Left ventricle myocardium inferior (tissue), 1 donor: ENCODE measurements at regions of chr15 and their contacts with region 1.

Region 1: GRCh38 chr15:51776952-51777574 is 25.7 kb downstream of the TMOD2 start:
- DNase-seq: no peak
- H3K4me3 ChIP-seq: no peak overlapping the region
- H3K27ac ChIP-seq: no peak overlapping the region
- H3K4me1 ChIP-seq: peaks cover under 1% of the 10 kb centered on the region
- H3K27me3 ChIP-seq: no peaks in the 10 kb centered on the region
- CTCF ChIP-seq: peak; percentile 83

Region 2: DNA sequence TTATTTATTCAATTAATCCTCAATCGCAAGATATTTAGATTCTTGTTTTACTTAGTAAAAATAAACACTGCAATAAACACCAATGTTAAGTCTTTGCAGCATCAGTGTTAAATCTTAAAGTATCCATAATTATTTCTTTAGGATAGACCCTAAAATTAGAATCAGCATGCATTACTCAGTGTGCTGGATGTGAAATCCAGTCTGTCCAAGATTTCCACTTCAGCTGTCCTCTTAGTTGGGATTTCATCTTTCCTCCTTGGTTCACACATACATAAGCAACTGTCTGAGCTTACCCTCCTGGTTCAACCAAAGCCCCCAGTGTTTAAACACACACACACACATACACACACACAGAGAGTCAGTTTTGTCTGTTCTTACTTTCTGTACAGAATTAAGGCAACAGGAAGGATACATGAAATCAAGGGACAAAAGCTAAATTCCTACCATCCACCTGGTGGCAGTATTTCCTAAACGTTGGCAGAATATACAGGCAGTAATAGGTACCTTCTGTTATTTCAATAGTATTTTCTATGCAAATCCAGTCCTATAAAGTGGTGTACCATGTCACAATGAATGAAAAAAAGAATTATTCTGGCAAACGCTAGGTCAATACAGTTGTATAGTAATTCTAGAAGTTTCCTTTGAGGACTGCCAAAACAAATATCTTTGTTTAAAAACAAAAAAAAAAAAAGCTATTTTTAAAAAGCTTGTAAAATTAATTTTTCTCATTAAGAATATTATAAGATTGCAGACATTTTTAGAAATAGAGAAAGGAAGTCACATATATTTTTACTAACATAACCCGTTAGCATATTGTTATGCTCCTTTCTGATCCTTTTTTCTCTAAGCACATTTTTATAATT is 127.2 kb before region 1 on chr15:
- intact Hi-C with region 1: loop called (anchors 1 kb)
- DNase-seq: no peak
- H3K4me3 ChIP-seq: no peak overlapping the region
- H3K27ac ChIP-seq: no peak overlapping the region
- H3K4me1 ChIP-seq: no peaks in the 10 kb centered on the region
- H3K27me3 ChIP-seq: no peaks in the 10 kb centered on the region
- CTCF ChIP-seq: peak; percentile 80

Region 3: GRCh38 chr15:51853998-51854397 is 76.9 kb after region 1 on chr15:
- intact Hi-C with region 1: no loop called
- DNase-seq: no peak
- H3K4me3 ChIP-seq: no peak overlapping the region
- H3K27ac ChIP-seq: no peak overlapping the region
- H3K4me1 ChIP-seq: peaks cover 57% of the 10 kb centered on the region
- H3K27me3 ChIP-seq: no peaks in the 10 kb centered on the region
- CTCF ChIP-seq: no peak

Region 4: DNA sequence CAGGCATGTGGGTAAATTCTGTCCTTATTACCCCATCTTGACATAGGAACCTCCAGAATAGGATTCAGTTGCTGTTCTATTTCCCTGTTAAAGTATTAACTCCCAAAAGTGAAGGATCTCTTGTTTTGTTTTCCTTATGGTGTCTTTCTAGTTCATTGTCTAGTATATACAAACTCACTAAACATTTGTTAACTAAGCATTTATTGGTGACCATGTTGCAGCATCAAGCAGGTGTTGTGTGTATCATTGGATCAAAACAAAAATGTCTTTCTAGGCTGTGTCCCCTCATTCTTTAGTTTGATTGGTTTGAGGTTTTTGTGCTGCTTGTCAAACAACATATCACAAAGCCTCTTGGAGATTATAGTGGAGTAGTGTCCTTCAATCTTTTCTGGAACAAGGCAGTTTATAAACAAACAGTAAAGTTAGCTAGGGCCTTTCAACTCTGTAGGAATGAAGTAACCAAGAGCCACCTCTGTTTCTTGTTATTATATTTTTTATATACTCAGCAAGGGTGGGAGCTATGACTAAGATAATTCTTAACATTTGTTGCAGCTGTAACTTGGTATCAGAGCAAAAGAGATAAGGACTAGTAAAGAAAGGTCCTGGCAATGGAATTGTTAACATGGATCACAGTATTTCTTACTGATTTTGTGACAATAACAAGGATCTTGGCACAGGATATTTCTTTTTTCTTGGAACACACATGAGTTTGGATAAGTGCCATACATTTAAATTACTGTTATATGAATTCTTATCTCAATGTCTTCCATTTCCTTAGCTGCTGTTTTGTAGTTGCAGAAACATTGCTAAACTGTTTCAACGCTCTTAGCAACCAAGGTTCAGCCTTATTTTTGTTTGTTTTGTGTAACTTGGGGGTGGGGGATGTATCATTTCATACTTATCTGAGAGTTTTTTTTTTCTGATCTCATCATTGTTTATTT is 101.7 kb after region 1 on chr15:
- intact Hi-C with region 1: no loop called
- DNase-seq: no peak
- H3K4me3 ChIP-seq: no peak overlapping the region
- H3K27ac ChIP-seq: peak overlapping the region; percentile 73
- H3K4me1 ChIP-seq: peaks cover 66% of the 10 kb centered on the region
- H3K27me3 ChIP-seq: no peaks in the 10 kb centered on the region
- CTCF ChIP-seq: no peak